Activated naive CD4-positive, alpha-beta T cell treated with anti-CD3 and anti-CD28 coated beads for 36 hours (primary cell): ENCODE measurements at regions of chr4 and their contacts with region 1.

Region 1: GRCh38 chr4:99504804-99505569 is 5.8 kb upstream of the C4orf17 start:
- DNase-seq: no peak
- H3K4me3 Mint-ChIP-seq: no peak overlapping the region
- H3K27ac Mint-ChIP-seq: no peak overlapping the region
- H3K4me1 Mint-ChIP-seq: peaks cover 49% of the 10 kb centered on the region
- H3K27me3 Mint-ChIP-seq: no peaks in the 10 kb centered on the region

Region 2: DNA sequence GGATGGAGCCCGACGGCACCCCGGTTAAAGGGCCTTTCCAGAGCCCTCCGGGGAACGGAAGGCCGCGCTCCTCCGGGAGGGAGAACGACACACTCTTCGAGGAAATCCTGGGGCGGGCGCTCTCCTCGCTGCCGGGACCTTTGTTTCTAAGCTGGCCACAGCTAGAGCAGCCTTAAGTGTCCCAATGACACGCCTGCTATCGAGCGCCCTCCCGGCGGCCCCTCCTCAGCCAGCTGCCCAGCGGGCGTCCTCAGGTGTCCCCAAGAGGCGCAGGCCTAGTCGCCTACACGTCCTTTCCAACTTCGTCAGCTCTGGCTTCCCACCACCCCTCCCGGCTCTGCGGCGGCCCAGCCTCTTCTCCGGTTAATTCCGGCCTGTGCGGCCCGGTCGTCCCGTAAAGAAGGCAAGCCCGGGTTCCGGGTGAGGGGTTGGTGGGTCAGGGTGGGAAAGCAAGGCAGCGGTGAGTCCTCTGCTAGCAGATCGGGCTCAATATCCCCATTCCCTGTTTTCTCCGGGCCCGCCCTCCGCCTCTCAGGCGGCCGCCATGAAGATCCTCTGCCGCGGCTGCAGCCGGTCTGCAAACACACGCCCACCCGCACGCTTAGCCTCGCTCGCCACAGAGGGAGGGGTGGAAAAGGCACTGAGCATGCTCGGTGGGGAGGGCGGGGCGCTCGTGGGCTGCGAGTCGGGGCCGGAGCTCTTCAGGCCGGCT is 1244.3 kb before region 1 on chr4:
- CTCF ChIA-PET with region 1: no interaction called
- intact Hi-C with region 1: loop called (anchors 5 kb)
- DNase-seq: peak; percentile 95
- H3K4me3 Mint-ChIP-seq: peak overlapping the region; percentile 93
- H3K27ac Mint-ChIP-seq: peak overlapping the region; percentile 94
- H3K4me1 Mint-ChIP-seq: peaks cover 43% of the 10 kb centered on the region
- H3K27me3 Mint-ChIP-seq: no peaks in the 10 kb centered on the region

Region 3: DNA sequence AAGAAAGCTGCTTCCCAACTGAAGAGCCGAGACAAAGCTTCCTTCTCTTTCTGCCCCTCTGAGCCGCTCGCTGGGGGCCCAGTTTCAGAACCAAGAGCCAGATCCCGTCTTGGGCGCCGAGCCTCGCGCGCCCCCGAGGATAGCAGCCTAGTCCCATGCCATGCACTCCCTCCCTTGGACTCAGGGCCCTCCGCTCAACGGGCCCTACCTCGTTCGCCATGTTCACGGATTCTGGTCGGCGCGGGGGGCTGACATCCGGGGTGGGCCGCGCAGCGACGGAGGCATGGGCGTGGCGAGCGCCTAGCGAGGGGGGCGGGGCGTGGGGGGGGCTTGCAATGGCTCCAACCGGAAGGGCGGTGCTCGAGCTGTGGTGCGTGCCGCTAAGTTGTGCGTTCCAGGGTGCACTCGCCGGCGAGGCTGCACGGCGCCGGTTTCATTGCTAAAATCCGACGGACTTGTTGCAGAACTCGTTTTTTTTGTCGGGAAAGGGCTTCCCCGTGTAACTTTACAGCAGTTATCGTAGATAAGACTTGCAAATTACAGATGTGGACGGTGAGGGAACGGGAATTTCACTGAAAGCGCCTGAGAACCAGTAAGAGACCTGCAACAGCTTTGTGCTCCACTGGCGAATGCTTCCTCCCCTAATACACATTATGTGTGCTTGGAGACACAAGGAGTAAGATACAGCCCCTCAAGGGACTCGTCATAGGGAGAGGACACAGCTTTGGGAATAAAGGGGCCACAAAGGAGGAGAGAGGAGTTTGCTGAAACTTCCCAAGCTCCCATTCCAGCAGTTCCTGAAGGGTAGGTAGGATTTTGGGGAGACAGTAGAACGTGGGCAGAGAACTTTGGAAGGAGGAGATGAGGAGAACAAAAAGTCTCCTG is 416.3 kb before region 1 on chr4 and contains the start of gene ADH5:
- CTCF ChIA-PET with region 1: no interaction called
- intact Hi-C with region 1: loop called (anchors 2 kb)
- DNase-seq: peak; percentile 92
- H3K4me3 Mint-ChIP-seq: peak within 1 kb of the TSS; percentile 96
- H3K27ac Mint-ChIP-seq: peak within 1 kb of the TSS; percentile 95
- H3K4me1 Mint-ChIP-seq: peaks cover 32% of the 10 kb centered on the region
- H3K27me3 Mint-ChIP-seq: no peaks in the 10 kb centered on the region
- total RNA-seq, gene ADH5: 94.3 to 99.9 TPM

Region 4: GRCh38 chr4:99447079-99447478 is 57.9 kb before region 1 on chr4:
- CTCF ChIA-PET with region 1: interaction called, 3 read pairs
- intact Hi-C with region 1: loop called (anchors 1 kb)
- DNase-seq: peak; percentile 36
- H3K4me3 Mint-ChIP-seq: no peak overlapping the region
- H3K27ac Mint-ChIP-seq: no peak overlapping the region
- H3K4me1 Mint-ChIP-seq: peaks cover 12% of the 10 kb centered on the region
- H3K27me3 Mint-ChIP-seq: peaks cover 2% of the 10 kb centered on the region

Region 5: DNA sequence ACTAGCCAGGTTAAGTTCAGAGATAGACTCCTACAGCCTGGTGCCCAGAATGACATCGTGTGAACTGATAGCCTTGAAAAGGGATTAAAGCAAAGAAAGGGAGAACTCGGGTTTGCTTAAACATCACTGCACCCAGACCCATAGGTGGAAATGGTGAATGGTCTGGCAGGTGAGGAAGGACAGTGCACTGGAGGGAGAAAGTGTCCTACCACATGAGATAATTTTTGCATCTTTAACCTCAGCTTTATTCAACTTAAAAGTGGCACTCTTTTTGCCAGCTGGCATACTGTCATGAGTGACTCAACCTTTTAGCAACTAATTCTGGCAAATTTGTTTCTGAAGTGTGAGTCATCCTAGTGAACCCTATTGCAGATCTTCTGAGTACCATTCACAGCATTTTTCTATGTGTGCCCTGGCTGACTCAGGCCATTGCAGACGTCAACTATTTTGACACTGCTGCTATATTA is 258.7 kb after region 1 on chr4:
- CTCF ChIA-PET with region 1: no interaction called
- intact Hi-C with region 1: loop called (anchors 1 kb)
- DNase-seq: peak; percentile 38
- H3K4me3 Mint-ChIP-seq: no peak overlapping the region
- H3K27ac Mint-ChIP-seq: no peak overlapping the region
- H3K4me1 Mint-ChIP-seq: peaks cover 27% of the 10 kb centered on the region
- H3K27me3 Mint-ChIP-seq: peaks cover 13% of the 10 kb centered on the region

Region 6: DNA sequence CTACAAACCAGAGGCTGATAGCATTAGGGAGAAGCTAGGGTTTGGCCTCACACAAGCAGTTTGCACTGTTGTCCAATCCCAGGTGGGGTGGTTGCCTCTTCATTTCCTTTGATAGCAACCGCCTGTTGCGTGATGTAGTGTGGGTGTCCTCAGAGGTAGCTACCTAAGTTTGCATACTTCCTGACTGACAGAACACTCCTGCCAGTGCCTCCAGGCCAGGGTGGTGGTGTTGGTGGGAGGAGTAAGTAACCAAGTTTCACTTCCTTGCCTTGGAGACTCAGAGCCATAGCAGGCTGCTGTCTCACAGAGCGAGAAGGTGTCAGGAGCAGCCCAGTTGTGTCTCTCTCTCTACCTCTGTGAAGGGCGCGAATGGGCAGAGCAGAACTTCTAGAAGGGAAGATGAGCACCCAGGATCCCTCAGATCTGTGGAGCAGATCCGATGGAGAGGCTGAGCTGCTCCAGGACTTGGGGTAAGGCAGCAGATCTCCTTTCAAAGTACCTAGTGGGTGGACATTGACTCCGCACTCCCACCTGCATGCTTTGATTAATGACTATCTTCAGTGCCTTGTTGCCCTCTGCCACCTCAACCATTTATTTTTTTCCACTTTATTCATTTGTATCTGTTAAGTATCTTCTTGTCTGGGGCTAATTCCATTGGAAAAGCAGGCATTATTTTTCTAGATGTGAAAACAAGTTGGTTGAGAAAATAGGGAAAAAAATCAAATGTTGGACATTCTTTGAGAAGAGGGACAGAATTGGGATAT is 311.7 kb after region 1 on chr4 and contains the start of gene DAPP1:
- CTCF ChIA-PET with region 1: interaction called, 3 read pairs
- intact Hi-C with region 1: loop called (anchors 2 kb)
- DNase-seq: peak; percentile 87
- H3K4me3 Mint-ChIP-seq: peak within 1 kb of the TSS; percentile 76
- H3K27ac Mint-ChIP-seq: peak within 1 kb of the TSS; percentile 94
- H3K4me1 Mint-ChIP-seq: peaks cover 71% of the 10 kb centered on the region
- H3K27me3 Mint-ChIP-seq: no peaks in the 10 kb centered on the region
- total RNA-seq, gene DAPP1: 24.4 to 25.8 TPM

Region 7: DNA sequence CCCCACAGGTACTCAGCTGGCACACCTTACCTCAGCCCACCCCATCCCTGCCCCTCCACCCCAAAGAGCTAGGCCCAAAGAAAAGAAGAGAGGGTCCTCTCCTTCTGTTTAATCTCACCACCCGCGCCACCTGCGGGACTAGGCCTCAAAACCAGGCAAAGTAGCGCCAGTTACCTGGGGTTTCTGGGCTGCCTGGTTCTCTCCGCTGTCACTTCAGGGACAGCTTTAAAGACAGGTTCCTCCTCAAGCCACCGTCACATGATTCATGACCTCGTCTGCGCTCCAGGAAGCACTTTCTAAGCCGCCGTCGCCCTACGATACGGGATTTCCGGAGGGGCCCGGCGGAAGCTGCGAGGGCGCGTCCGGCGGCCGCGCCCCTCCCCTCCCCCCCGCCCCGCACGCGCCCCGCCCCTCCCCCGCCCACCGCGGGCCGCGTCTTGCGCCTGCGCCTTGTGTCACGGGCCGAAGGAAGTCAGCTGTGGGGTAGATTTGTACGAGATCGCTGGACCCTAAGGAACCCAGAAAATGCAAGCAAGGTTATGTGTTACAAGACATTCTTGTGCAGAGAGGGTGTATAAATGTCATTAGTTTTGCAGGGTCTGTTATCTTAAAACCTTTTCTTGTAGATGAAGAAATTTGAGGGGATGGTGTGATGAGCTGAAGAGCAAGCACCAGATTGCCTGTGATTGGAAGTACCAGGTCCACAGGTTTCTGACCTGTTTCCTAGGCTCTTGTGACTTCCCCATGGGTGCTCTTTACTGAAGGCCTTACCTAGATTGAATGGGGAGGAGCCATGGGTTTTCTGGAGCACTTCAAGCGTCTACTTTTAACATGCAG is 389.4 kb after region 1 on chr4 and contains the start of gene LAMTOR3:
- CTCF ChIA-PET with region 1: no interaction called
- intact Hi-C with region 1: loop called (anchors 5 kb)
- DNase-seq: peak; percentile 92
- H3K4me3 Mint-ChIP-seq: peak within 1 kb of the TSS; percentile 95
- H3K27ac Mint-ChIP-seq: peak within 1 kb of the TSS; percentile 92
- H3K4me1 Mint-ChIP-seq: peaks cover 32% of the 10 kb centered on the region
- H3K27me3 Mint-ChIP-seq: no peaks in the 10 kb centered on the region
- total RNA-seq, gene LAMTOR3: 24.9 to 26.9 TPM